Psoas muscle (tissue), 8 donors: ENCODE measurements at regions of chrX and their contacts with region 1.

Region 1: DNA sequence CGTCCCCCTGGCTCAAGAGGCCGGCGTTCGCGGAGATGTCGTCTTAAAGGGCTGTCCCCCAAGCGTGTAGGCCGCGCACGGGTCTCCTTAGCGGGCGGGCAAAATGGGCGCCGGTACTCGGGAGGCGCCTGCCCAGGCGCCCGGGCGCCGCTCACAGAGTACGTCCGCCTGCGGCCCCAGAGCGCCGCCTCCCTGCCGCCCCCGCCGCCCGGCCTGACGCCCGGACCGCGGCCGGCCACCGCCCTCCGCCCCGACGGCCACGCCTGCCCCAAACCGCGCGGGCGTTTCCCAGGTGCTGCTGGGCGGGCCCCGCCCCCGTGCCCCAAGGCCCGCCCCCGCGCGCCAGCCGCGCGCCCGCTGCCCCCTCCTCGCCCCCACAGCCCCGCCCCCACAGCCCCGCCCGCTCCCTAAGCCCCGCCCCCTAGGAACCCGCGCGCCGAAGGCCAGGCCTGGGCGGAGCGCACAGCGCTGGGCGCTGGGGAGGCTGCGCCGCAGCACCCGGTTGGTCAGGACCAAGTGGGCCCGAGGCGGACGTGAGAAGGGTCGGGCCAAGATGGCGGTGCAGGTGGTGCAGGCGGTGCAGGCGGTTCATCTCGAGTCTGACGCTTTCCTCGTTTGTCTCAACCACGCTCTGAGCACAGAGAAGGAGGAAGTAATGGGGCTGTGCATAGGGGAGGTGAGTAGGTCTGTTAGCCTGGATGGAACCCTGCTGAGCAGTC is at the starts of genes BRCC3, CMC4 and MTCP1:
- DNase-seq: peak; percentile 79 to 88
- ATAC-seq: peak; percentile 91 to 94 (median 92)
- H3K4me3 ChIP-seq: peak within 1 kb of the TSS; percentile 68
- H3K27ac ChIP-seq: peak within 1 kb of the TSS; percentile 86
- H3K4me1 ChIP-seq: peaks cover 7% of the 10 kb centered on the region
- H3K27me3 ChIP-seq: no peaks in the 10 kb centered on the region
- CTCF ChIP-seq: no peak
- total RNA-seq, gene BRCC3: 12.9 to 16.8 (median 15.2) TPM
- total RNA-seq, gene CMC4: 6.2 to 13.0 (median 10.8) TPM
- total RNA-seq, gene MTCP1: 10.5 to 22.9 (median 18.0) TPM

Region 2: GRCh38 chrX:155026726-155027508 is 44.2 kb before region 1 on chrX and contains the start of gene FUNDC2:
- intact Hi-C with region 1: loop called (anchors 2 to 5 kb)
- DNase-seq: peak; percentile 93 to 98
- ATAC-seq: peak; percentile 87 to 92 (median 90)
- H3K4me3 ChIP-seq: peak within 1 kb of the TSS; percentile 76
- H3K27ac ChIP-seq: peak within 1 kb of the TSS; percentile 95
- H3K4me1 ChIP-seq: no peaks in the 10 kb centered on the region
- H3K27me3 ChIP-seq: no peaks in the 10 kb centered on the region
- CTCF ChIP-seq: no peak
- total RNA-seq, gene FUNDC2: 258 to 318 (median 275) TPM